A673 (cell line): ENCODE measurements at regions of chr17 and their contacts with region 1.

Region 1: DNA sequence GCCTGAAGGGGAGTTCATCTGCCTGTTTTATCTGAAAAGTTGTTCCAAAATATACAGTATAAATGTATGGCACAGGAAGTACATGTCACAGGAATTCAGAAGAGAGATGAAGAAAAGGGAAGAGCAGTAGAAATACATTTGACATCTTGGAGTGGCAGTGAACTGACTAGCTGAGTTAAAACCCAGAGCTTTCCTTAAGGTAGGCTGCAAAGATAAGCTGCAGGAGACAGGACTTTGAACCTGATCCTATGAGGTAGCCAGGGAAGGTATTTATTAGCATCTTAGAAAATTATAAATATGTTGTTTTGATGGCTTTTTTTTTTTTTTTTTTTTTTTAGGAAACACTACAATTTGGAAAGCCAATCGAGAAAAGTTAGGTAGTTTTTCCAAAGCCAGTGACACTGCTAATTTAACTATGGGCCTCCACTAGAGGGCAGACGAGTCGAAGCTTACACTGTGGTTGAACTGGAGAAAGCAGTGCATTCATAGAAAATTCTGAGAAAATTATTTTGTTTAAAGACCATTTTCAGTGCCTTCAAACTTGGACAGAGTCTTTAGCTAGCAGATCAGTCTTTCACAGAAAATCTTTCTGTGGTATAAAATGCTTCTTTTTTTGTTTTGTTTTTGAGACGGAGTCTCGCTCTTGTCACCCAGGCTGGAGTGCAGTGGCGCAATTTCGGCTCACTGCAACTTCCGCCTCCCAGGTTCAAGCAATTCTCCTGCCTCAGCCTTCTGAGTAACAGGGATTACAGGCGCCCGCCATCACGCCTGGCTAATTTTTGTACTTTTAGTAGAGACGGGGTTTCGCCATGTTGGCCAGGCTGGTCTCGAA is 122.3 kb downstream of the SSH2 start:
- DNase-seq: peak; percentile 81
- H3K4me3 ChIP-seq: no peak overlapping the region
- H3K27ac ChIP-seq: no peak overlapping the region
- H3K4me1 ChIP-seq: no peaks in the 10 kb centered on the region
- H3K27me3 ChIP-seq: no peaks in the 10 kb centered on the region
- CTCF ChIP-seq: peak; percentile 84

Region 2: DNA sequence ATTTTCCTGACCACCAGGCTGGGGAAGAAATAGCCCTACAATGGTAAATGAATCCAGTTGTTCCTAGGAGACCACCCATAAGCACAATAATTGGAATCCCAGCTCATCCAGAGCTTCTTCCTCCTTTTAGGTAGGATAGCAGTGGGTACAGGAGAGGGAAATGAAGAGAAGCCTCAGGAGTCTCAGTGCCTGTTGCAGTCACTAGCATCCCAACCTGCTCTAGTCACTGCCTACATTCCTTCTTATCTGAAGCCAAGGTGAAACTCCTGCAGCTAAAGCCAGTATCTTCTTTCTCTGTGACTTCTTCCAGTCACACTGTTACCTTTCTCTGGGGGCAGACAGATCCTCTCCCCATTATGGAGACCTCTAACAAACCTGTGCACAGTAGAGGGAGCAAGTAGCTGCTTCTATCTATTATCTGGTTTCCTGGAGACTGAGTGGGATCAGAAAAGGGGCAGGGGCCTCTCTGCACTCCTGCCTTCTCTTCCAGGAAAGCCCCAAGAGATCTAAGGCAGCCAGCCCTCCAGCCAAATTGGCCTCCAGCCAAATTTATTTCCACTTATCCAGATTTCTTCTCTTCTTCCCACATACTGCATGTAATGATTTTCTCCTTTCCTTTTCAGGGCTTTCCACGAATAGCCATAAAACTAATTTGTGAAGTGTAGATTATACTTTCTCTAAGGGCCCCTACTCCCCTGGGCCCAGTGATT is 36.8 kb after region 1 on chr17:
- CTCF ChIA-PET with region 1: interaction called, 13 read pairs
- POLR2A ChIA-PET with region 1: no interaction called
- intact Hi-C with region 1: no loop called
- DNase-seq: peak; percentile 78
- H3K4me3 ChIP-seq: no peak overlapping the region
- H3K27ac ChIP-seq: no peak overlapping the region
- H3K4me1 ChIP-seq: peaks cover 18% of the 10 kb centered on the region
- H3K27me3 ChIP-seq: no peaks in the 10 kb centered on the region
- CTCF ChIP-seq: no peak

Region 3: DNA sequence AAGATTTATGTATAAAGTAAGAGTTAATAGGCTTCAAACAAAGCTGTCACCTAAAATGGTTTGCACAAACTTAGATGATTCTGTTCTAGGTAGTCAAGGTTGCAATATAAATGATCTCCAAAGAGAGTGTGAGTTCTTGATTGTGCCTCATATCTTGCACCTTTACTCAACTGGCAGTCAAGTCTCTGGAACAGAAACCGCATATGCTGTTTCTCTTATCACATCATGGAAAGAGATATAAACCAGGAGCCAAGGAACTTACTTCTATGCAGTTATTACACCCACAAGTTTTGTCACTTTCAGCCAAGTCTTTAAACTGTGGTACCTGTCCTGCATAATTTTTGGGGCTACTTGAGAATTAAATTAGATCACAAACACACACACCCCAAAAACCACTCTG is 117.0 kb after region 1 on chr17:
- CTCF ChIA-PET with region 1: interaction called, 48 read pairs
- POLR2A ChIA-PET with region 1: no interaction called
- intact Hi-C with region 1: no loop called
- DNase-seq: no peak
- H3K4me3 ChIP-seq: no peak overlapping the region
- H3K27ac ChIP-seq: no peak overlapping the region
- H3K4me1 ChIP-seq: peaks cover 23% of the 10 kb centered on the region
- H3K27me3 ChIP-seq: no peaks in the 10 kb centered on the region
- CTCF ChIP-seq: no peak

Region 4: GRCh38 chr17:30021708-30022317 is 214.1 kb after region 1 on chr17:
- CTCF ChIA-PET with region 1: interaction called, 12 read pairs
- POLR2A ChIA-PET with region 1: no interaction called
- intact Hi-C with region 1: loop called (anchors 5 kb)
- DNase-seq: peak; percentile 66
- H3K4me3 ChIP-seq: no peak overlapping the region
- H3K27ac ChIP-seq: no peak overlapping the region
- H3K4me1 ChIP-seq: no peaks in the 10 kb centered on the region
- H3K27me3 ChIP-seq: no peaks in the 10 kb centered on the region
- CTCF ChIP-seq: peak; percentile 90

Region 5: DNA sequence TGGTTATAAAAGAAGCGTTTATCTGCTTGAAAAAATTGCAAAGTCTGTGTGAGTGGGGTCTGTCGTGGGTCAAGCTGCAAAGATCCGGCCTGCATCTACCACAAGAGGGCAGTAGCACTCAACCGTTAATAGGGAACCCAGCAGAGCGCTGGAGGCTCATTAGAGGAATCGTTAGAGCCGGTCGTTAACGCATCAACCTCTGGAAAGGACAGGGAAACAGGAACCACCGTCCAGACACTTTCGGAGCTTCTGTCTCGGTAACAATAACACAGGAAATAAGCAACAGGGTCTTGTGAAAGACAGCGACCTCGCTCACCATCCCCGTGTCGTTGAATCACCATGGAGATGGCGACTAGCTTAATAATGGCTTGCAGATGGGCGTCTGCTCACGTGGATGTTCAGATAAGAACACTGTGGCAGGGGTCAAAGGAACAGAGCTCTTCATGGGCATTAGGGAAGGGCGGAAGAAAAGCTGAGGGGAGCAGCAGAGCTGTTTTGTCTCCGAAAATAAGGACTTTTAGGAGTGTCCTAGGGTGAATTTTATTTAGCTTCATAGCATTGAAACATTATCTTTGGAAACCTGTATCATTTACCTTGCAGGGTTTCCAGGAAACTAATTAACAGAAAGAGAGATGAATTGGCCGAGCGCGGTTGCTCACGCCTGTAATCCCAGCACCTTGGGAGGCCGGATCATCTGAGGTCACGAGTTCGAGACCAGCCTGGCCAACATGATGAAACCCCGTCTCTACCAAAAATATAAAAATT is 297.0 kb after region 1 on chr17:
- CTCF ChIA-PET with region 1: interaction called, 10 read pairs
- POLR2A ChIA-PET with region 1: no interaction called
- intact Hi-C with region 1: no loop called
- DNase-seq: peak; percentile 88
- H3K4me3 ChIP-seq: peak overlapping the region; percentile 44
- H3K27ac ChIP-seq: no peak overlapping the region
- H3K4me1 ChIP-seq: no peaks in the 10 kb centered on the region
- H3K27me3 ChIP-seq: no peaks in the 10 kb centered on the region
- CTCF ChIP-seq: peak; percentile 98

Region 6: DNA sequence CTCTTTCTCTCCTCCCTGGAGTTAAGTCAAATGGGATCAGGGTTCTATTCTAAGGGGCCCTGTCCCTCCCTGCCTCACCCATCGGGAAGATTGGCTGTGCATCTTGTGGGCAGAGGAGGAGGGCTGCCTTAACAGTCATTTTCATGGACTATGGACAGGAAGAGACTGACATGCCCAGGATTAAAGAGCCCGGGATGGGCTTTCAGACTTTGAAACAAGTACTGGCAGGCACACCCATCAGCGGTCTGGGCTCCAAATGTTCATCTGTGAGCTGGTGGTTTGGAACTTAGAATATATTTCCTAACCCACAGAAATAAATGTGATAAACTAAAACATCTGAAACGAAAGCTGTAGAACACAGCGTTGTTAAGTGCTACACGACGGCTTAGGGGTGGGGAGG is 421.3 kb after region 1 on chr17:
- CTCF ChIA-PET with region 1: no interaction called
- POLR2A ChIA-PET with region 1: interaction called, 11 read pairs
- intact Hi-C with region 1: no loop called
- DNase-seq: no peak
- H3K4me3 ChIP-seq: no peak overlapping the region
- H3K27ac ChIP-seq: no peak overlapping the region
- H3K4me1 ChIP-seq: no peaks in the 10 kb centered on the region
- H3K27me3 ChIP-seq: peaks cover 23% of the 10 kb centered on the region
- CTCF ChIP-seq: no peak

Region 7: GRCh38 chr17:30263552-30264333 is 456.0 kb after region 1 on chr17:
- CTCF ChIA-PET with region 1: no interaction called
- POLR2A ChIA-PET with region 1: no interaction called
- intact Hi-C with region 1: no loop called
- DNase-seq: no peak
- H3K4me3 ChIP-seq: no peak overlapping the region
- H3K27ac ChIP-seq: peak overlapping the region; percentile 35
- H3K4me1 ChIP-seq: no peaks in the 10 kb centered on the region
- H3K27me3 ChIP-seq: no peaks in the 10 kb centered on the region
- CTCF ChIP-seq: no peak